ENCODE measurements at regions of chr3 and their contacts with region 1.

Region 1: DNA sequence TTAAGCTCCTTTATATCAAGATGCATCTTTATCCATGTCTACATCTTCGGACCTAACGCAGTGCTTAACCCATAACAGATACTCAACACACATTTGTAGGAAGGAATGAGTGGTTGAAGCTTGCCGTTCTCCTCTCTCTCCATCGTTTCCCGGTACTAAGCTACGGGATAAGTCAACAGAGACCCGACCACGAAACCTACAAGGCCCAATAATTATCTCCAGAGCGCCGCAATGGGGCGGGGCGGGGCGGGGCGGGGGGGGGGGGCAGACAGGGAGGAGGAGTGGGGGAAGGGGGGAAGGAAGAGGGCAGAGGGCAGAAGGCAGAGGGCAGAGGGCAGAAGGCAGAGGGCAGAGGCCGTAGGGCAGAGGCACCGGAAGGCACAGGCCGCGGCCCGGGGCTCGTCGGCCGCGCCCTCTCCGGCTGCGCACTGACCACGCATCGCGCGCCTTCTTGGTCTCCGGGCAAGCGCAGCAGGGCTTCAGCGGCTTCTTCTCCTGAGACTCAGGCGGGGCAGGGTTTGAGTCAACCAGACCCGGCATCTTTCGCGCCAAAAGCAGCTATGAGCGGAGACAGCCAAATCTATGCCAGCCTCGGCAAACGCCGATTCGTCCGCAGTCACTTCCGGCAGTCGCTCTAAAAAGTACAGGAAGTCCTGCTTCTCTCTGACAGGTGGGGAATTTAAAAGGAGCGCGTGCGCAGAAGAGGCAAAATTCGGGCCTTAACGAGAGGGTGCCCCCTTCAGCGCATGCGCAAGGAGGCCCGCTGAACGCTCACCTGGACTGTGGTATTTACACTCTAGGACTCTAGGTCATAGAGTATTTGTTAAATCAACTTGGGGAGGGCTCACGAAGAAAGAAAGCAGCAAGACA is at the start of gene COX17:
- DNase-seq: peak; percentile 93
- CTCF ChIP-seq: no peak

Region 2: DNA sequence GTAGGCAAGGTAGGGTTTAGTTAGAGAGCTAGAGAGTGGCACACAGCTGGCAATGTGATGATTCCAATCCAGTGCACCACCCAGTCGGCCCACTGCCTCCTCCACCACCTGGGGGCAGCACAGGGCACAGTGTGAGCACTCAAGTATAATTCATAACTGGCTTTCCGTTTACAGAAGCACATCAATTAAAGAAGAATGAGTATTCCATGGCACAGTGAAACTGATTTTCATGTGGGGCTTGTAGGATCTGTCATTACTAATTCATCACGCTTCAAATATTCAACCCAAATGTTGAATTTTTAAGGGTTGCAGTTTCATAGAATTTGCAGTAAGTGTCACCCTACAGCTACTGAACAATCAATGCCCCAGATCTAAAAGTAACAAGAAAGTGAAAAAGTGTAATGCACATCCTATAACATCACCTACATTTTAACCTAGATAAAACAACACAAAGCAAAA is 792.2 kb before region 1 on chr3:
- in situ Hi-C with region 1: loop called (anchors 10 kb)
- DNase-seq: peak; percentile 28
- CTCF ChIP-seq: peak; percentile 96

Region 3: GRCh38 chr3:119293871-119294695 is 382.9 kb before region 1 on chr3 and contains the start of gene ARHGAP31:
- in situ Hi-C with region 1: loop called (anchors 25 kb)
- DNase-seq: peak; percentile 84
- CTCF ChIP-seq: no peak

Region 4: DNA sequence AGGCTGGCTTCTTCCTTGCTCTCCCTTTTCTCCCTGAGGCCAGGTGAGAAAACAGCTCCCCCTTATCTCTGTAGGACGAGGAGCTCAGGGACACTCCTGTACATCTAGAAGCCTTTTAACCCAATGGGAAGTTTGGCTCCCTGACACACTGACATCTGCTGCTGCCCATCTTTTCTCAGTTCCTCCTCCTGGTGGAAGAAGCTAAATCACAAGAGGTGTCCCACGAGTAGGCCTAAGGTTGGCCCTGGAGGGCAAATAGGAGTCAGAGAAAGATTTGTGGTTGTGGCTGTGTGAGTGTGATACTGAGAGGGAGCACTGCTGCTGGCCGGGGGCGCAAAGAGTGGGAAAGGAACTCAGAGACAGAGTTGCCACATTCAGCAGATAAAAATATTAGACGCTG is 333.3 kb before region 1 on chr3:
- in situ Hi-C with region 1: no loop called
- DNase-seq: peak; percentile 42
- CTCF ChIP-seq: no peak

Region 5: DNA sequence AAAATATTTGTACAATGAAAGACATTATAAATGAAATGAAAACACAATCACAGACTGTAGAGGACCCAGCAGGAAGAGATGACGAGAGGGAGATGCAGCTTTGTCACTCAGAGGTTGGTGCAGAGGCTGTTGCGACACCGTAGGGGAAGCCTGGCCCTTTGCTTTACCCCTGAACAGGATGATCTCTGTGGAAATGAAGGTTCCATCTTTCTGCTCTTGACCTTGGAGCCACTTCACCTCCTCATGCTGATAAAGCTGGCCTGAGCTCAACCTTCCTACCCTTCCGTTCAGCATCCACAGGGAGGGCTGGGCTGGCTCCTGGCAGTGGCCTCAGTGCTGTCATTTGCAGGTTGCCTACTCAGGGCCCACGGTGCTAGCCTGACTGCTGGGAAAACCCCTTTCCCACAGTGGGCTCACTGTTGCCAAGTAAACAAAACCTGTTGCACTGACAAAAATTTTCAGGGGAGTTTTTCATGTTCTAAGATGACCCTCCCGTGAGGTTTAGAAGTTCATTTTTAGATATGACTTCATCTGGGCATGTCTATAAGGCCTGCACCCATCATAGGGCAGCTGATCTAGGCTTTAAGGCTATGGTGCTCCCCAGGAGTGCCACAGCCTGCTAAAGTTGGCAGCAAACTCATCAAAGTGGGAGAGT is 114.6 kb before region 1 on chr3:
- in situ Hi-C with region 1: loop called (anchors 10 kb)
- DNase-seq: peak; percentile 69
- CTCF ChIP-seq: no peak

Region 6: GRCh38 chr3:119944091-119944490 is 267.1 kb after region 1 on chr3:
- in situ Hi-C with region 1: no loop called
- DNase-seq: peak; percentile 28
- CTCF ChIP-seq: no peak

Region 7: DNA sequence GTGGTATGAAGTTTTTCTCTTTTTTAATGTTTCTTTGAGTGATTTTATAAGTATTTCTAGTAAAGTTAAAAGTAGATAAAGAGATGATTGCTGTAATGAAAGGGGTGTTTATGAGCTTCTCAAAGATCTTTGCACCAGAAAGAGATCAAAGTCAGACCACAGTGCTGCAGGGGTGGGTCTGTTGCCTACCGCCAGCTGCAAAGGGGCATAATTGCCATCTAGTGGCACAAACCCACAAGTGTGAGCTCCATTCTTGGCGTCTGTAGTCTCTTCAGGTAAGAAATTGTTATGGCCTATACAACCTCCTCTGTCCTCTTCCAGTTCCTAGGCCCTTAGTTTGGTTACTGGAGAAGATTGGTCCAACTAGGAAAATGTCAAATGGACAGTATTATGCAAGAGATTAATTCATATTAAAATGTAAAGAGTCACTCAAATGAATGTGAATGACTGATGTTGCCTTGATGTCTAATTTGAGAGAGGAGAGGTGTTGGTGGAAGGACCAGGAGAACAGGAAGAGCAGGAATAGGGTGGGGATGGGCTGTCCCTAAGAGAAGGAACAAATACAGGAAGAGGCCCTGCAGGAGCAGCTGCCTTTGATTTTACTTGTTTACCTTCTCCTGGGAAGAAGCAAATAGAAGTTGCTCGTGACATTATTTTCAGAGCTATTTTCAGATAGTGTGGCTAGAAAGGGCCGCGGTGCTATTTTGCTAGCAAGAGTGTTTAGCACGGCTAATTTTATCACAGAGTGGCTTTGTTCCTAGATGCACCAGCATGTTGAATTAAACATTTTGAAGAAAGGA is 470.3 kb after region 1 on chr3:
- in situ Hi-C with region 1: no loop called
- DNase-seq: peak; percentile 32
- CTCF ChIP-seq: peak; percentile 26

Measured in GM13976 (cell line).